Right ventricle myocardium inferior (tissue), 1 donor: ENCODE measurements at regions of chr19 and their contacts with region 1.

Region 1: GRCh38 chr19:53879140-53880081 is 2.6 kb upstream of the PRKCG start:
- DNase-seq: peak; percentile 96
- ATAC-seq: peak; percentile 99

Region 2: DNA sequence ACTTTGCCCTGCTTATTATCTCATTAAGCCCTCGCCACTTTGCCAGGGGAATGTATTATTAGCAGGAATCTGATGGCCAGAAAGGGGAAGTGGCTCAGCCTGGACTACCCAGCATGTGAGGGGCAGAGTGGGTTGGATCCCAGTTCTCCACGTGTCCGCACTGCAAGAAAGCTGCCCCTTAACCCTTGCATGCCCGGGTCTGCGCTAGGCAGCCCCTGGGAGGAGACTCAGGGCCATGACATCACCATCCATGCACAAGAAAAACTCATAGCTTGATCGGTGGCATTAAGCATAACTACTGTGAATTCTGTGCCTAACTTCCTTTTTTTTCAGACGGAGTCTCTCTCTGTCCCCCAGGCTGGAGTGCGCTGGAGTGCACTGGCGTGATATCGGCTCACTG is 92.3 kb after region 1 on chr19:
- intact Hi-C with region 1: no loop called
- DNase-seq: no peak
- ATAC-seq: no peak

Region 3: GRCh38 chr19:54102421-54103169 is 223.2 kb after region 1 on chr19 and contains the start of gene NDUFA3:
- intact Hi-C with region 1: loop called (anchors 10 kb)
- DNase-seq: peak; percentile 99
- ATAC-seq: peak; percentile 100
- total RNA-seq, gene NDUFA3: 561 TPM